ENCODE measurements at regions of chr2 and their contacts with region 1.

Region 1: DNA sequence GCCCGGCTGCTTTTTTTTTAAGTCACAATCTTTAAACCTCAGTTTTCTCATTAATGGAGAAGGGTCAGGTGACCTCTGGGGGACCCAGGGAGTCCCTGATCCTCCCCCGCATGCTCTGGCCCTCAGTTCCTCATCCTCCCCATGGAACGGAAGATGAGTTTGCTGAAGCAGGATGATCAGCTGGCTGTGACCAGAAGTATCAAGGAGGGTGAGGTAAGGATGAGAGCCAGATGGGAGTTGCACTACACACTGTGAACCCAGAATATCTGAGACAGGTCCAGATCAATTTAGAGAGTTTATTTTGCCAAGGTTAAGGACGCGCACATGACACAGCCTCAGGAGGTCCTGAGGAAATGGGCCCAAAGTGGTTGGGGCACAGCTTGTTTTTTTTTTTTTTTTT is 3.8 kb downstream of the CATIP start:
- DNase-seq: no peak
- H3K4me3 ChIP-seq: no peak overlapping the region
- H3K27ac ChIP-seq: no peak overlapping the region
- H3K4me1 ChIP-seq: peaks cover 0 to 13% (median 6%) of the 10 kb centered on the region in 4 experiments; a peak in 6 of 7 replicates
- H3K27me3 ChIP-seq: no peaks in the 10 kb centered on the region; a peak in 1 of 7 replicates
- CTCF ChIP-seq: no peak
- EP300 ChIP-seq: no peak
- POLR2A ChIP-seq: no peak
- RAD21 ChIP-seq: no peak

Region 2: DNA sequence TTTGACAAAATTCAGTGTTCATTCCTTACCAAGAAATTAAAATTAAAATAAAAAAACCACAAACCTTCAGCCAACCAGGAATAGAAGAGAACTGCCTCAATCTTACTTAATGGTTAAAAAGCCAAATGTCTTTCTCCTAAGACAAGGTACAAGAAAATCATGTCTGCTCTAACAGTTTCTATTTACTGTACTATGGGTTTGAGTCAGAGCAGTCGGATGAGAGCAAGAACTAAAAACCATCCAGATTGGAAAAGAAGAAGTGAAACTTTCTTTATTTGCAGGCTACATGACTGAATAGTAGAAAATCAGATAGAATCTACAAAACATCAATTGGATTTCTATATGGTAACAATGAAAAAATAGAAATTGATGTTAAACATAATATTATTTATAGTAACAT is 945.1 kb before region 1 on chr2:
- CTCF ChIA-PET with region 1: no interaction called
- POLR2A ChIA-PET with region 1: no interaction called
- DNase-seq: no peak
- H3K4me3 ChIP-seq: no peak overlapping the region
- H3K27ac ChIP-seq: no peak overlapping the region
- H3K4me1 ChIP-seq: no peaks in the 10 kb centered on the region
- H3K27me3 ChIP-seq: no peaks in the 10 kb centered on the region
- CTCF ChIP-seq: no peak
- EP300 ChIP-seq: no peak
- POLR2A ChIP-seq: no peak
- RAD21 ChIP-seq: no peak

Region 3: GRCh38 chr2:218269899-218270720 is 90.3 kb before region 1 on chr2 and contains the starts of genes AAMP and PNKD:
- CTCF ChIA-PET with region 1: interaction called, 29 read pairs
- POLR2A ChIA-PET with region 1: interaction called, 5 read pairs
- DNase-seq: peak; percentile 97 to 100
- H3K4me3 ChIP-seq: peak within 1 kb of the TSS; percentile 89 to 95 (median 92)
- H3K27ac ChIP-seq: peak within 1 kb of the TSS; percentile 28; the same call in 1 of the 2 replicates
- H3K4me1 ChIP-seq: peaks cover 0 to 7% (median 4%) of the 10 kb centered on the region in 4 experiments; a peak in 4 of 7 replicates
- H3K27me3 ChIP-seq: no peaks in the 10 kb centered on the region
- CTCF ChIP-seq: no peak
- EP300 ChIP-seq: no peak
- POLR2A ChIP-seq: peak in 1 of 2 experiments; percentile 82; a peak in 2 of 3 replicates
- RAD21 ChIP-seq: no peak
- total RNA-seq, gene AAMP: 119 and 125 TPM in 2 replicates
- total RNA-seq, gene PNKD: 43.9 and 44.4 TPM in 2 replicates

Region 4: GRCh38 chr2:218286570-218287459 is 73.6 kb before region 1 on chr2:
- CTCF ChIA-PET with region 1: interaction called, 20 read pairs
- POLR2A ChIA-PET with region 1: no interaction called
- DNase-seq: peak; percentile 46 to 77
- H3K4me3 ChIP-seq: no peak overlapping the region
- H3K27ac ChIP-seq: no peak overlapping the region
- H3K4me1 ChIP-seq: peaks cover 5 to 11% (median 7%) of the 10 kb centered on the region in 4 experiments; a peak in 4 of 7 replicates
- H3K27me3 ChIP-seq: no peaks in the 10 kb centered on the region
- CTCF ChIP-seq: no peak
- EP300 ChIP-seq: no peak
- POLR2A ChIP-seq: no peak
- RAD21 ChIP-seq: no peak

Region 5: DNA sequence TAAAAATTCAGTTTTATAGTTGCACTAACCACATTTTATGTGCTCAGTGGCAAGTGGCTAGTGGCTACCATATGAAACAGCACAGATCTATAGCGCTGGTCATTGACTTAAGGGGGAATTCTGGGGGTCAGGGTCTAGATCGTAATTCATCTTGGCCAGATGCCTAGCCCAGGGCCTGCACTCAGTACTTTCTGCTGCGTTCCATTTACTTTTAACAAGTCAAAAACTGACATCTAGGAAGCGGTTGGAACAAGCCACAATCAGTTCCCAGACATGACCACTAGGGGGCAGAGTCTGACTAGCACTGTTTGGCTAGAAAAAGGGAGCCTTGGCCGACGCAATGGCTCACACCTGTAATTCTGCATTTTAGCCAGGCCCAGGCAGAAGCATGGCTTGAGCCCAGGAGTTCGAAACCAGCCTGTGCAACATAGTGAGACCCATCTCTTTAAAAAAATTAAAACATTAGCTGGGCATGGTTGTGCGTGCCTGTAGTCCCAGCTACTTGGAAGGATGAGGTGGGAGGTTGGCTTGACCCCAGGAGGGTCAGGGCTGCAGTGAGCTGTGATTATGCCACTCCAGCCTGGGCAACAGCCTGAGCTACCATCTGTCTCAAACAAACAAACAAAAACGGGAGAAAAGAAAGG is 59.1 kb before region 1 on chr2:
- CTCF ChIA-PET with region 1: interaction called, 192 read pairs
- POLR2A ChIA-PET with region 1: interaction called, 3 read pairs
- DNase-seq: peak; percentile 76 to 93
- H3K4me3 ChIP-seq: no peak overlapping the region
- H3K27ac ChIP-seq: no peak overlapping the region
- H3K4me1 ChIP-seq: no peaks in the 10 kb centered on the region
- H3K27me3 ChIP-seq: no peaks in the 10 kb centered on the region
- CTCF ChIP-seq: peak; percentile 78 to 96 (median 93)
- EP300 ChIP-seq: no peak
- POLR2A ChIP-seq: no peak
- RAD21 ChIP-seq: peak; percentile 96 to 98

Region 6: DNA sequence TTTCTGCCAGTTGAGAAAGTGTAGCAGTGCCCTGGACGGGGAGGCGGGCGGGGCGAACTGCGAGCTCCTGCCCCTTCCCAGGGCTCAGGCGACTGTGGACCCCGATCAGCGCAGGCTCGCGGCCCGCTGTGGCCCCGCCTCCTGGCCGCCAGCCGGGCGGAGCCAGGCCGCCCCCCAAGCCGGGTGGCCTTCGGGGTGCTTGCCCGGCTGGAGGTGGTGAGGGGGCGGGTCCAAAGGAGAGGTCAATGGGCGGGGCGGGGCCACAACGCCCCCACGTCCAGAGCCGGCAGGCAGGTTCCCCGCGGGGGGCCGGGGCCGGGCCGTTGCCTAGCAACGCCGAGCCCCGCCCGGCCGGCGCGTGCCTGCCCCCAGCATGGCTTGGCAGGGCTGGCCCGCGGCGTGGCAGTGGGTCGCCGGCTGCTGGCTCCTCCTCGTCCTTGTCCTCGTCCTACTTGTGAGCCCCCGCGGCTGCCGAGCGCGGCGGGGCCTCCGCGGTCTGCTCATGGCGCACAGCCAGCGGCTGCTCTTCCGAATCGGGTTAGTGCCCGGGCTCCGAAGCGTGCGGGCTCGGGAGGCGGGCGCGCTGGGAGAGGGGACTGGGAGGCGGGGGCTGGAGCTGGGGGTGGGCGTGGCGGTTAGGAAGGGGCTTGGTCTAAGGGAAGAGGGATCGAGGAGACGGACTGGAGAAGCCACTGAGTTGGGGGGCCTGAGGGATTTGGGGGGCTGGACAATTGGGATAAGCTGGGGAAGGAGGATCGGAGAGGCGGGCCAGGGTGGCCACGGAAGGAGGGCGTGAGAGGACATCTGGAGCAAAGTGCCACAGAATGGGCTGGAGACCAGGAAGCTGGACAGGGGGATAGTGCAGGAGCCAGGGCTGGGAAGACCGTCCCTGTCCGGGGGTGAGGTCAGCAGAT is 37.3 kb before region 1 on chr2:
- CTCF ChIA-PET with region 1: interaction called, 39 read pairs
- POLR2A ChIA-PET with region 1: interaction called, 5 read pairs
- DNase-seq: peak; percentile 79 to 95
- H3K4me3 ChIP-seq: peak overlapping the region; percentile 65 to 81 (median 73)
- H3K27ac ChIP-seq: 0 out of 2 replicates have a peak overlapping the region, but pooled peaks have one; percentile 64
- H3K4me1 ChIP-seq: peaks cover 5 to 28% (median 20%) of the 10 kb centered on the region in 4 experiments
- H3K27me3 ChIP-seq: no peaks in the 10 kb centered on the region
- CTCF ChIP-seq: no peak; a peak in 1 of 4 replicates
- EP300 ChIP-seq: peak in 1 of 2 experiments; percentile 15; a peak in 1 of 3 replicates
- POLR2A ChIP-seq: peak in 1 of 2 experiments; percentile 38; a peak in 1 of 3 replicates
- RAD21 ChIP-seq: no peak

Region 7: GRCh38 chr2:218343591-218343990 is 16.9 kb before region 1 on chr2:
- CTCF ChIA-PET with region 1: interaction called, 18 read pairs
- POLR2A ChIA-PET with region 1: interaction called, 3 read pairs
- DNase-seq: no peak
- H3K4me3 ChIP-seq: no peak overlapping the region
- H3K27ac ChIP-seq: no peak overlapping the region
- H3K4me1 ChIP-seq: peaks cover 0 to 4% (median 0%) of the 10 kb centered on the region in 4 experiments; a peak in 1 of 7 replicates
- H3K27me3 ChIP-seq: no peaks in the 10 kb centered on the region
- CTCF ChIP-seq: no peak
- EP300 ChIP-seq: no peak
- POLR2A ChIP-seq: no peak
- RAD21 ChIP-seq: no peak

Region 8: DNA sequence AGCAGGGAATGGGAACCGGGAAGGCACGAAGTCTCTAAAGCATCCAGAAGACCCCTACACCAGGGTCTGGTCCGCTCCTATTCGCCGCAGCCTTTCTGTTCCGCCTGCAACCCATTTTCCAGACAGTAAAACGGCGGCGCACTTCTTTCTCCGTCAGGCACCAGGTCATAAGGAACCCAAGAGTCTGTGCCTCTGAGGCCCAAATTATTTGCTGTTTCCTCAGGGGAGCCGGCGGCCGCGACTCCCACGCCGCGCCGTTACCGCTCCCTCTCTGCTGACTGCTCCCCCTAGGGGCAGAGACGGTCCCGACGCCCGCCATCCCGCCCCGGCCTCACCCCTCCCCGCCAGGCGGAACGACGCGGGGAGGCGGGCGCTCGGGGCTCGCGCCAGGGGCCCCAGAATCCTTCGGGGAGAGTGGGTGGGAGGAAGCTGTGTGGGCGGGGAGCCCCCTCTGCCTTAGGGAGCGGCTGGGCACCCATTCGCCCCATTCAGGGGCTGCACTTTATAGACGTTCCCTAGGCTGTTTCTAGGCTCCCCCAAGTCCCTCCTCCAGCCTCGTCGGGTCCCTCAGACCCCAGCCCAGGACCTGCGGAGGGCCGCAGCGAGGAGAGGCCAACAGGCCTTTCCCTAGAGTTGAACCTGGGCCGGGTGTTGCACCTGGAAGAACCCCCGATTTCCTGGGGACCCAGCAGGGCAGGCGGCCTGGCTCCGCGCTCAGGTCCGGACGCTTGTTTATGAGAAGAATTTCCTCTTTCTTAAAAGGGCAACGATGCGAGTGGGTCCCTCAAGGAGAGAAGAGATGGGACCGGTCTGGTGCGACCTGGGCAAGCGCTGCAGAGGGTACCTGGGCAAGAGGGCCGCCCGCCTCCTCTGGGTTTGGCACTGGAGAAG is 35.6 kb after region 1 on chr2:
- CTCF ChIA-PET with region 1: interaction called, 31 read pairs
- POLR2A ChIA-PET with region 1: no interaction called
- DNase-seq: peak; percentile 71 to 96
- H3K4me3 ChIP-seq: peak overlapping the region; percentile 49 to 77 (median 64)
- H3K27ac ChIP-seq: peak overlapping the region; percentile 94
- H3K4me1 ChIP-seq: peaks cover 0 to 39% (median 25%) of the 10 kb centered on the region in 4 experiments; a peak in 6 of 7 replicates
- H3K27me3 ChIP-seq: peaks cover 22 to 34% (median 31%) of the 10 kb centered on the region in 4 experiments
- CTCF ChIP-seq: peak in 2 of 3 experiments; percentile 70 to 75; a peak in 3 of 4 replicates
- EP300 ChIP-seq: 0 out of 3 replicates have a peak, but pooled peaks of 1 of the 2 experiments have one; percentile 69
- POLR2A ChIP-seq: no peak; a peak in 1 of 3 replicates
- RAD21 ChIP-seq: peak; percentile 60 to 69

Region 9: DNA sequence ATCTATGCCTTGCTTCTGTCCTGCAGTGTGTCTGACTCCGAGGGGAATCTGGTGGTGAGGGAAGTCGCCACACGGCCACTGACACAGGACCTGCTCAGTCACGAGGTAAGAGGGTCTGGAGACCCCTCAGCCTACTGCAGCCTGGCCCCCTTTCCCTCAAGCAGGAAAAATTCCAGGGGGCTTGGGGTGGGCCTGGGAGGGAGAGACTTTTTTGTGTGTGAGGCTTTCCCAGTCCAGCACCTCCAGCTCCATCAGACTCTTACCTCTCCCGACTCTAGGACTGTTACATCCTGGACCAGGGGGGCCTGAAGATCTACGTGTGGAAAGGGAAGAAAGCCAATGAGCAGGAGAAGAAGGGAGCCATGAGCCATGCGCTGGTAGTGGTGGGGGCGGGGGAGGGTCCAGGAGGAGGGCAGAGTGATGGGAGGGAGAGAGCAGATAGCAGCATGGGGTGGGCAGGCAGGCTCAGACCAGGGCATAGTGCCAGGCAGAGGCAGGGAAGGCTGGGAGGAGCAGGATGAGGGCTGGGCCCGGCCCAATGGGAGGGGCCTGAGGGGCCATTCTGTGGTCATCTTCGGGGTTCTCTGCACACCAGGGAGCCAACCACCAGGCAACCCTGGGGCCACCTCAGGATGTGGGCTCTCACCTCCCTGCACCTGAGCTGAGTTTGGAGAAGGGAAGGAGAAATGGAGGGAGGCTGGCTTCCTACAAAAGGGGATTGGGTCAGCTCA is 69.3 kb after region 1 on chr2:
- CTCF ChIA-PET with region 1: no interaction called
- POLR2A ChIA-PET with region 1: no interaction called
- DNase-seq: no peak
- H3K4me3 ChIP-seq: no peak overlapping the region
- H3K27ac ChIP-seq: no peak overlapping the region; the same call in 1 of the 2 replicates
- H3K4me1 ChIP-seq: peaks cover 0 to 3% (median 0%) of the 10 kb centered on the region in 4 experiments; a peak in 1 of 7 replicates
- H3K27me3 ChIP-seq: no peaks in the 10 kb centered on the region
- CTCF ChIP-seq: no peak
- EP300 ChIP-seq: no peak
- POLR2A ChIP-seq: no peak
- RAD21 ChIP-seq: no peak

Region 10: DNA sequence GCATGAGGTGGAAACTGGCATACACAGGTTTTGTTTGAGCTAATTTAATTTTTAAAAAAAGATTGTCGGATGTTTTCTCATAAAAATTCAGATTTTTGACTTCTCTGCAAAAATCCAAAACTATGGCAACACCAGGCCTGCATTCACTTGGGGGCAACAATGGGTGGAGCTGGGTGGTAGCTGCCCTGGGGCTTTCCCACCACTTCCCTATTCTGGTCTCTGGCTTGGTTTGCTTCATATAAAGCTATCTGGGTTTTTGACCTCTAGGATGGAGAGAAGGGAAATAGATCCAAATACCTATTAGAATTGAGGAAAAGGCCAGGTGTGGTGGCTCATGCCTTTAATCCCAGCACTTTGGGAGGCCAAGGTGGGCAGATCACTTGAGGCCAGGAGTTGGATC is 416.0 kb after region 1 on chr2:
- CTCF ChIA-PET with region 1: no interaction called
- POLR2A ChIA-PET with region 1: no interaction called
- DNase-seq: no peak
- H3K4me3 ChIP-seq: no peak overlapping the region
- H3K27ac ChIP-seq: no peak overlapping the region
- H3K4me1 ChIP-seq: 0 out of 7 replicates have a peak, but pooled peaks cover 0 to 1% (median 0%) of the 10 kb centered on the region in 4 experiments
- H3K27me3 ChIP-seq: peaks cover 0 to 9% (median 5%) of the 10 kb centered on the region in 4 experiments; a peak in 4 of 7 replicates
- CTCF ChIP-seq: no peak
- EP300 ChIP-seq: no peak
- POLR2A ChIP-seq: no peak
- RAD21 ChIP-seq: no peak